Activated T-helper 2 cell treated with anti-CD3 and anti-CD28 coated beads, Interferon-gamma antibody, Interleukin-2, Interleukin-4, amounts not matched to agents 10 μg/mL and 5 μg/mL and 100 μg/mL, durations not matched to agents 14 hours and 24 hours and 36 hours (primary cell): ENCODE measurements at regions of chr12 and their contacts with region 1.

Region 1: GRCh38 chr12:71663561-71664294 is at the start of gene ZFC3H1:
- DNase-seq: peak; percentile 91
- H3K4me3 Mint-ChIP-seq: peak within 1 kb of the TSS; percentile 100
- H3K27ac Mint-ChIP-seq: peak within 1 kb of the TSS; percentile 100
- H3K4me1 Mint-ChIP-seq: peaks cover 35% of the 10 kb centered on the region
- H3K27me3 Mint-ChIP-seq: no peaks in the 10 kb centered on the region
- total RNA-seq, gene ZFC3H1: 70.4 and 72.5 TPM in 2 replicates

Region 2: DNA sequence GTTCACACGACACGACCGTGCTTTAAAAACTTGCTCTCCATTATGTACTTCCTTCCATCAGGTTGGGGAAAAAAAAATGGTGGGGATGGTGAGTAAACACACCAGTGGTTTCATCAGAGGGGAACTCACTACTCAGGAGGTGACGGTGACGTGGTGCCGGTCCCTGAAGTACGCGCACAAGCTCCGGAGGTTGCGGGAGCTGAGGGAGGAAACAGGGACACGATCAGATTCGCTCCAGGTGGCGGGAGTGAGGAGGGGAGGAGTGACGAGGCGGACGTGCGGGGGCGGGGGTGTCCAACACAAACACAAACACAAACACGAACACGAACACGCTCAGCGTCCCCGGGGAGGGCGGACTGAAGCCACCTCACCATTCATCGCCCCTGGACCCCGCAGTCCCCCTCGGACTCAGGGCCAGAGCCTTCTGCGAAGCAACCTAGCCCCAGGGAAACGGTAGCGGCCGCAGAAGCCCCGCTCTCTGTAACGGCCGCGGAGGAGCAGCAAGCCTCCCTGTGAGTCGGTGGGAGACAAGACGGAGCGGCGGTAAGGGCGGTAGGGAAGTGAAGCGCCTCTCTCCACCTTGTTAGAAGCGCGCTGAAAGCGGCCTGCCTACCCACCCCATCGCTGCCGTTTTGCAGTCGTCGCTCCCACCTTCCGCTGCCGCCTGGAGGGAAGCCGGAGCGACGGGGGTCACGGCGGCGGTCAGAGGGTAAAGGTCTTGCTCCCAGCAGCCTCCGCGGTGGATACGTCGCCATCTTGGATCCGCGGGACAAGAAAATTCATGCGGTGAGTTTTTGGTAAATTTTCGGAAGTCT is 1420.8 kb before region 1 on chr12 and contains the start of gene CNOT2:
- intact Hi-C with region 1: loop called (anchors 5 kb)
- DNase-seq: peak; percentile 85
- H3K4me3 Mint-ChIP-seq: peak within 1 kb of the TSS; percentile 97
- H3K27ac Mint-ChIP-seq: peak within 1 kb of the TSS; percentile 99
- H3K4me1 Mint-ChIP-seq: peaks cover 45% of the 10 kb centered on the region
- H3K27me3 Mint-ChIP-seq: no peaks in the 10 kb centered on the region
- total RNA-seq, gene CNOT2: 67.1 and 69.1 TPM in 2 replicates

Region 3: DNA sequence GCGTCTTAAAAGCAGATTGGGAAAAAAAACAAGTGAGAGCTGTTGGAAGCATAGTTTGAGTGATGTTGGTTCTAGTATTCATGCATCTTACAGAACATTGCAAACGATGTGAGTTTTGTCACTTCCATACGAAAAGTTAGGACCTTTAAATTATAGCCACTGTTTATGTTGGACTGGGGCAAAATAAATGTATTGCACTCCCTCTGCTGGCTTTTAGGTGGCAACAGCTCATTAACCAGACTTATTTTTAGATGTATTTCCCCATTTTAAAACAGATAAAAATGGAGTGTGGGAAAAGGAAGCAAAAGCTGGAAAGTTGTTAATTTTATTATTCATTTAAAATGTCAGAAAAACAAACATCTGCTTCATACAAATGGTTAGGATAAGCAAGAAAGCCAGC is 112.2 kb before region 1 on chr12:
- intact Hi-C with region 1: no loop called
- DNase-seq: no peak
- H3K4me3 Mint-ChIP-seq: no peak overlapping the region
- H3K27ac Mint-ChIP-seq: no peak overlapping the region
- H3K4me1 Mint-ChIP-seq: no peaks in the 10 kb centered on the region
- H3K27me3 Mint-ChIP-seq: no peaks in the 10 kb centered on the region

Region 4: DNA sequence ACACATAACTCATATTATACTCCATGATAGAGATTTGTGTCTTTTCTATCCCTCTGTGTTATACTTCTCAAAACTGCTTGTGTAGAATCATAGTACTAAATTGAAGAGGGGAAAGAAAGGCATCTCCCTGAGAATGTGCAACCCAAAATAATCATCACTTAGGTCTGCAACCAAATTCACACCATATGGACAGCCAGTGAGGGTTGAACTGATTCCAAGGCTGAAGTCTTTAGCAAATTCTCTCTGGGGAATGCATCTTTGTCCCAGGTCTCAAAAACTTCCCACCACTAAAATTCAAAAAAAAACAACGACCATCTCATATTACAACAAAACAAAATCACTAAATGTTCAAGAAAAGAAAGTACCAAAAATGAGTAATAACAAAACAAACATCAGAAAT is 11.1 kb before region 1 on chr12:
- intact Hi-C with region 1: loop called (anchors 1 kb)
- DNase-seq: no peak
- H3K4me3 Mint-ChIP-seq: no peak overlapping the region
- H3K27ac Mint-ChIP-seq: no peak overlapping the region
- H3K4me1 Mint-ChIP-seq: peaks cover 31% of the 10 kb centered on the region
- H3K27me3 Mint-ChIP-seq: no peaks in the 10 kb centered on the region

Region 5: DNA sequence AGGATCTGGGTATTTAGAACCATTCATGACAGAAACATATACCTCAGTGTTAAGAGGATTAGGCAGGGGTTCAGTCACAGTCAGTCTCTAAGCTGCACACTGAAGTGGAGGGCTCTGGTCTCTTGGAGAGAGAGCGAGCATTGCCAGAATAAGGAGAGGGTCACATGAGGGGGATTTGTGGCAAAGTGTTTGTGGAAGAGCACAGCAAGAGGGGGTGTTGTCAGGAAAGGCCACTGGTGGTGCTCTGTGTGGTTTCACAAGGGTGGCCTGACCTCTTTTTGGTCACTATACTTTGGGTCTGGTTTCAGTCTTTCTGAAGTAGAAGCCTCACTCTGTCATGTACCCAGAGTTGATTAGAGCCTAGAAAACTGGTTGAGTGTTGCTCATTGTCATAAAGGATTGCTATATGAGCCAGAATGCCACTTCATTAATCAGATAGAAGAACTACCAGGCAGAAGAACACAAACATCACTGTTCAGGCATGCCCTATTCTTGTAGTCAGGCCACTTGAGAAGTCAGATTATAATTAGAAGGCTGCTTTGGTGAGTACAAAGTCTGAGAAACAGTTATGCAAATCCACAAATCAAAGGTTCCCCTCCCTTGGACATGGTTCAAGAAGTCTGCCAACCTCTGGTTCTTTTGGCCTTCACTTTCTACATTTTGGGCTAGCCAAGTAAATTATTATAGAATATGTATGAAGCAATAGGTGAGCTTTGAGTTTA is 30.5 kb after region 1 on chr12:
- intact Hi-C with region 1: no loop called
- DNase-seq: no peak
- H3K4me3 Mint-ChIP-seq: no peak overlapping the region
- H3K27ac Mint-ChIP-seq: no peak overlapping the region
- H3K4me1 Mint-ChIP-seq: no peaks in the 10 kb centered on the region
- H3K27me3 Mint-ChIP-seq: no peaks in the 10 kb centered on the region

Region 6: GRCh38 chr12:71731751-71732712 is 68.3 kb after region 1 on chr12:
- intact Hi-C with region 1: no loop called
- DNase-seq: no peak
- H3K4me3 Mint-ChIP-seq: no peak overlapping the region
- H3K27ac Mint-ChIP-seq: no peak overlapping the region
- H3K4me1 Mint-ChIP-seq: no peaks in the 10 kb centered on the region
- H3K27me3 Mint-ChIP-seq: peaks cover 3% of the 10 kb centered on the region

Region 7: DNA sequence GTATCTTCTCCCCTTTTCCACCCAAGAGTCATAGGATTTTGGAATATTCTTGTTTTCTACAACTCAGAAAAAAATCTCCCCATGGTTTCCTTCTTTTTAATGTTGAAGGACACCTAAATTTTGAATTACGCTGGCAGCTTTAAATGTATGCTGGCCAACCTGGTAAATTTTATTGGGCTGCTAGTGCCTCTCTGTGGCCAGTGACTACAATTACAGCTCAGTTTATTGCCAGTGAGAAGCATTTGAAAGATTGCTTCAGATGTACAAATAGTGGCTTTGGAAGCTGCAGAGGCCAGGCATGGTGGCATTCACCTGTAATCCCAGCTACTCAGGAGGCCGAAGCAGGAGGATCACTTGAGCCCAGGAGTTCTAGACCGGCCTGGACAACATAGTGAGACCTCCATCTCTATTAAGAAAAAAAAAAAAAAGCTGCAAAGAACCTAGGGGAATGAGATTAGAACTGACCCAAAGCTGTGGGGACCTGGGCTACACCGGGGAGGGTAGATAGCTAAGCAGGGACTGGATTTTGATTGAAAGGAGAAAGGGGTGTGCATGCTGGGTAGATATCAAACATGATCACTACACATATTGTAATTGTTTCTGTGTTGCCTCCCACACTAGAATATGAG is 83.4 kb after region 1 on chr12:
- intact Hi-C with region 1: loop called (anchors 1 kb)
- DNase-seq: peak; percentile 26
- H3K4me3 Mint-ChIP-seq: no peak overlapping the region
- H3K27ac Mint-ChIP-seq: no peak overlapping the region
- H3K4me1 Mint-ChIP-seq: peaks cover 2% of the 10 kb centered on the region
- H3K27me3 Mint-ChIP-seq: peaks cover 39% of the 10 kb centered on the region

Region 8: DNA sequence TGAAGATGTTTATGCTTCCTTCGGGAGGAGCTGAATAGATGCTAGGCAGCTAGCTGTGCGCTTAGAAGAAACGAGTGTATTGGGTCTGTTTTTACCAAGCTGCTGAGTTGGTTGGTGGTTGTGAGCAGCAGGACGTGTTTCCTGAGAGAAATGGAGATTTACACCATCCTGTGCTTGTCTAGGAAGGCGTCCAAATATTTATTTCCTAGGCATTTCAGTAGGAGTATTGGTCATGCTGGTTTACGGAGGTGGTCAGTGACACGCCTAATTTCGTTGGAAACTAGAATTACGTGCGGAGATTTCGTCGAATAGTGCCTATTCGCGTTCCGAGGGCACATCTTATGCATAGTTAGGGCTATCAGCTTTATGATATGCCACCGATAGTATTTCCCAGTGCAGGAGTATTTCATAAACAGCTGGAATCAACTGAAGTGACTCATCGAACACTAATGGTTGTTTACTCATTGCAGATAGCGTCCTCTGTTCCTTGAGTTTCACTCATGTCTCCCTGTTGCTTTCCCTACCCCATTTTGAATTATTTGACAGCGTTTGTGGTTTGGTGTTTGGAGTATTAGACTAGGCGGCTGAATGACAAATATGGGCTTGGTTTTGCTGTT is 176.6 kb after region 1 on chr12:
- intact Hi-C with region 1: loop called (anchors 1 kb)
- DNase-seq: no peak
- H3K4me3 Mint-ChIP-seq: peak overlapping the region; percentile 94
- H3K27ac Mint-ChIP-seq: peak overlapping the region; percentile 96
- H3K4me1 Mint-ChIP-seq: peaks cover 35% of the 10 kb centered on the region
- H3K27me3 Mint-ChIP-seq: no peaks in the 10 kb centered on the region

Region 9: GRCh38 chr12:71900091-71900490 is 236.4 kb after region 1 on chr12:
- intact Hi-C with region 1: no loop called
- DNase-seq: no peak
- H3K4me3 Mint-ChIP-seq: no peak overlapping the region
- H3K27ac Mint-ChIP-seq: no peak overlapping the region
- H3K4me1 Mint-ChIP-seq: peaks cover 8% of the 10 kb centered on the region
- H3K27me3 Mint-ChIP-seq: no peaks in the 10 kb centered on the region